ENCODE measurements at regions of chr14 and their contacts with region 1.

Region 1: GRCh38 chr14:70887207-70887681 is 20.0 kb upstream of the PCNX1 start:
- DNase-seq: no peak
- H3K4me3 Mint-ChIP-seq: peak overlapping the region; percentile 68
- H3K27ac Mint-ChIP-seq: peak overlapping the region; percentile 96
- H3K4me1 Mint-ChIP-seq: peaks cover 93% of the 10 kb centered on the region
- H3K27me3 Mint-ChIP-seq: no peaks in the 10 kb centered on the region

Region 2: GRCh38 chr14:69625299-69626131 is 1261.7 kb before region 1 on chr14:
- intact Hi-C with region 1: loop called (anchors 10 kb)
- DNase-seq: peak; percentile 72
- H3K4me3 Mint-ChIP-seq: peak overlapping the region; percentile 69
- H3K27ac Mint-ChIP-seq: peak overlapping the region; percentile 89
- H3K4me1 Mint-ChIP-seq: peaks cover 76% of the 10 kb centered on the region
- H3K27me3 Mint-ChIP-seq: no peaks in the 10 kb centered on the region

Region 3: GRCh38 chr14:70856851-70857495 is 30.3 kb before region 1 on chr14:
- intact Hi-C with region 1: loop called (anchors 1 kb)
- DNase-seq: no peak
- H3K4me3 Mint-ChIP-seq: no peak overlapping the region
- H3K27ac Mint-ChIP-seq: no peak overlapping the region
- H3K4me1 Mint-ChIP-seq: peaks cover 10% of the 10 kb centered on the region
- H3K27me3 Mint-ChIP-seq: peaks cover 2% of the 10 kb centered on the region

Region 4: GRCh38 chr14:70907176-70907995 is 20.1 kb after region 1 on chr14 and contains the start of gene PCNX1:
- intact Hi-C with region 1: loop called (anchors 1 kb)
- DNase-seq: peak; percentile 87
- H3K4me3 Mint-ChIP-seq: peak within 1 kb of the TSS; percentile 84
- H3K27ac Mint-ChIP-seq: peak within 1 kb of the TSS; percentile 90
- H3K4me1 Mint-ChIP-seq: peaks cover 57% of the 10 kb centered on the region
- H3K27me3 Mint-ChIP-seq: no peaks in the 10 kb centered on the region
- total RNA-seq, gene PCNX1: 54.5 and 59.0 TPM in 2 replicates

Region 5: GRCh38 chr14:71021347-71022014 is 134.2 kb after region 1 on chr14:
- intact Hi-C with region 1: loop called (anchors 5 kb)
- DNase-seq: no peak
- H3K4me3 Mint-ChIP-seq: no peak overlapping the region
- H3K27ac Mint-ChIP-seq: peak overlapping the region; percentile 82
- H3K4me1 Mint-ChIP-seq: peaks cover 29% of the 10 kb centered on the region
- H3K27me3 Mint-ChIP-seq: no peaks in the 10 kb centered on the region

Region 6: GRCh38 chr14:71320107-71320733 is 433.0 kb after region 1 on chr14:
- intact Hi-C with region 1: loop called (anchors 5 kb)
- DNase-seq: peak; percentile 99
- H3K4me3 Mint-ChIP-seq: peak within 1 kb of the TSS; percentile 92
- H3K27ac Mint-ChIP-seq: peak within 1 kb of the TSS; percentile 91
- H3K4me1 Mint-ChIP-seq: peaks cover 42% of the 10 kb centered on the region
- H3K27me3 Mint-ChIP-seq: no peaks in the 10 kb centered on the region

Measured in activated T-helper 2 cell treated with anti-CD3 and anti-CD28 coated beads, Interferon-gamma antibody, Interleukin-2, Interleukin-4, amounts not matched to agents 10 μg/mL and 5 μg/mL and 100 μg/mL, durations not matched to agents 14 hours and 24 hours and 36 hours (primary cell).